PC-3 (cell line): ENCODE measurements at regions of chr1 and their contacts with region 1.

Region 1: GRCh38 chr1:207885129-207886032 is 25.5 kb downstream of the CD34 start:
- DNase-seq: peak; percentile 90
- ATAC-seq: peak; percentile 99
- H3K4me3 ChIP-seq: no peak overlapping the region
- H3K27ac ChIP-seq: no peak overlapping the region
- H3K4me1 ChIP-seq: peaks cover 10% of the 10 kb centered on the region; the same call in 1 of the 2 replicates
- H3K27me3 ChIP-seq: no peaks in the 10 kb centered on the region
- CTCF ChIP-seq: peak; percentile 98

Region 2: DNA sequence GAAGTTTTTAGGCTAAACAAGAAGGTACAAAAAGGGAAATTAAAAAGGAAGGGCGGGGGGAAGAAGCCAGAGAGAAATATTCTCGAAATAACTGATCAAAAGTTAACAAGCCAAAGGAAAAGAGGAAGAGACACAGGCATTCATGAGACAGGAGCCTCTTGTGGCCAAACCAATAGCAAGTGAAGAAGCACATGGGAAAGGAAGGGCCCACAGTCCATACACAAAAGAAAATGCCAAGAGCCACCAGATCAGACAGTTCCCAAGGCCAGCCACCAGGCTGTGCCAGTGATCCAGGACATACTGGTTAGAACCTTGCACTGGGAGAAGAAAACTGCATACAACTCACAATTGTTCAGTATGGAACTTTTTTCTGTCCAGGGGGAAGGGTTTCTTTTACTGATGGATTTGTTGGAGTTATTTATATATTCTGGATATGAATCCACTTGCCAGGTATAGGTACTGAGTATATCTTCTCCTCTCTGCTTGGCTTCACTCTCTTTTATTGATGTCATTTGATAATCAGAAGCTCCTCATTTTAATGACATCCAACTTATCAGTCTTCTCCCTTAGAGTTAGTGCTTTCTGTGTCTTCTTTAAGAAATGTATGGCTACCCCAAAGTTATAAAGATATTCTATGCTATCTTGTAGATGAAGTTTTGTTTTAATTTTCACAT is 56.8 kb before region 1 on chr1:
- CTCF ChIA-PET with region 1: interaction called, 6 read pairs
- POLR2A ChIA-PET with region 1: interaction called, 7 read pairs
- intact Hi-C with region 1: loop called (anchors 1 kb)
- DNase-seq: peak; percentile 93
- ATAC-seq: peak; percentile 72
- H3K4me3 ChIP-seq: no peak overlapping the region
- H3K27ac ChIP-seq: no peak overlapping the region
- H3K4me1 ChIP-seq: peaks cover 43% of the 10 kb centered on the region
- H3K27me3 ChIP-seq: no peaks in the 10 kb centered on the region
- CTCF ChIP-seq: peak; percentile 97

Region 3: GRCh38 chr1:207868774-207869721 is 16.3 kb before region 1 on chr1:
- CTCF ChIA-PET with region 1: interaction called, 11 read pairs
- POLR2A ChIA-PET with region 1: interaction called, 3 read pairs
- intact Hi-C with region 1: no loop called
- DNase-seq: peak; percentile 91
- ATAC-seq: peak; percentile 71
- H3K4me3 ChIP-seq: peak overlapping the region; percentile 98
- H3K27ac ChIP-seq: peak overlapping the region; percentile 76
- H3K4me1 ChIP-seq: peaks cover 47% of the 10 kb centered on the region
- H3K27me3 ChIP-seq: no peaks in the 10 kb centered on the region
- CTCF ChIP-seq: peak; percentile 66

Region 4: DNA sequence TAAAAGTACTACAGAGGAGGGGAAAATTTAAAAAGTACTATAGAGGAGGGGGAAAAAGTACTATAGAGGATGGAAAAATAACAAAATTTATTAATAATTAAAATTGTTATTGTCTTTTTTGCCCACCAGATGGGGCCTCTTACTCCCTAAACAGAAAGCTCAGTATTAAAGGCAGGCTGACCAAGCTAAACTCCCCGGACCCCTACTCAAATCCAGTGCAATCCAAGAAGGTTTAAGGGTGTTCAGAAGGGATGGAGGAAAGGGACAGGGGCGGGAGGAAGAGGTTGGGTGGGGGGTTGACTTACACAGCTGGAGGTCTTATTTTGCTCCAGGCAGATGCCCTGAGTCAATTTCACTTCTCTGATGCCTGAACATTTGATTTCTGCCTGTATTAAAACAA is 11.8 kb after region 1 on chr1:
- CTCF ChIA-PET with region 1: interaction called, 13 read pairs
- POLR2A ChIA-PET with region 1: no interaction called
- intact Hi-C with region 1: no loop called
- DNase-seq: peak; percentile 52
- ATAC-seq: peak; percentile 53
- H3K4me3 ChIP-seq: no peak overlapping the region
- H3K27ac ChIP-seq: no peak overlapping the region
- H3K4me1 ChIP-seq: no peaks in the 10 kb centered on the region
- H3K27me3 ChIP-seq: no peaks in the 10 kb centered on the region
- CTCF ChIP-seq: peak; percentile 57

Region 5: DNA sequence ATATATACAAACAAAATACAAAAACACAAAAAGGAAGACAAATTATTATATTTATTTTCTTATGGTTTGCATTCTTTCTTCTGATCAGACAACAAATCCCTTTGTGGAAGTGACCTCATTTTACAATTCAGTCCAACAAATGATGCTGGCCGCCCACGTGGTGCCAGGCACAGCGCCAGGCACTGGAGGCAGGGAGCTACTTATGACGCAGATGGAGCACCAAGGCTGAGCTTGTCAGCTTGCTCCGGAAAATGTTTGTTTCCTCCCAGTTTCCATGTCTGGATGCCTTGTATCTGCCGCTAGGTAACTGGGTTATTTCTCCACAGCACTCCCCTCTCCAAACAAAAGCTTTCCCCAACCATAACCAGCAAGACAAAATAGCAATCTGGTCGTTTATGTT is 56.3 kb after region 1 on chr1:
- CTCF ChIA-PET with region 1: interaction called, 11 read pairs
- POLR2A ChIA-PET with region 1: no interaction called
- intact Hi-C with region 1: no loop called
- DNase-seq: no peak
- ATAC-seq: no peak
- H3K4me3 ChIP-seq: no peak overlapping the region
- H3K27ac ChIP-seq: no peak overlapping the region
- H3K4me1 ChIP-seq: peaks cover 20% of the 10 kb centered on the region
- H3K27me3 ChIP-seq: no peaks in the 10 kb centered on the region
- CTCF ChIP-seq: no peak

Region 6: DNA sequence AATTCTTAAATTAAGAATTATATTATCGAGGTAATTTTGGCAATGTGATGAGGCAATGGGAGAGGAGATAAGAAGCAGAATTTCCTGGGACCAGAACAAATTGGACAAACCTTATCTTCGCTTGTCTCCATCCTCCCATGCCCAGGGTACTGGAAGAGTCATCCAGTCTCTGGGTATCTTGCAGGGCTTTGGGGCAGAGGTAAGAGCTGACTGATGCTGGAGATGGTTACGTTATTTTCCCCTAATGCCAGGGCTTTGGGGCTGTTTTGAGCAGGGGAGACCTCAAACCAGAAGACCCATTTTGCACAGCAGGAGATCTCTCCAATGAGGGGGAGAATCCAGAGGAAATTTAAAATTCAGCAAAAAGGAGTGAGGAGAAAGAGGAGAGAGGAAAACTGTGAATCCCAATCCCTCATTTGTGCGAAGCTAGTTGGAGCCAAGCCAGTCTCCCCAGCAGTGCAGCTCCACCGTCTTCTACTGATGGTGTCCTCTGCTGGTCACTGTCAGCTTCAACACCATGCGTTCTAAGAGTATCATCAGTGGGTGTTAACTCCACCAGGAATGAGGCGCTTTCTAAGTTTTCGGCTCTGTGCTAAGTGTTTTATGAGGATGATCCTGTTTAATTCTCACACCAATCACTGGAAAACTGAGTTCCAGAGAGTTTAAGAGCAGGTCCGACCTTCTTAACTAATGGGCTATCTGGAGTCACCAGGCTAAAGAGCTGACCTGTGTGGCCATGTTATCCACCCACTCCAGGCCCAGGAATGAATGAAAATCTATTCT is 112.3 kb after region 1 on chr1:
- CTCF ChIA-PET with region 1: interaction called, 5 read pairs
- POLR2A ChIA-PET with region 1: no interaction called
- intact Hi-C with region 1: loop called (anchors 1 kb)
- DNase-seq: peak; percentile 79
- ATAC-seq: peak; percentile 87
- H3K4me3 ChIP-seq: no peak overlapping the region
- H3K27ac ChIP-seq: no peak overlapping the region
- H3K4me1 ChIP-seq: no peaks in the 10 kb centered on the region
- H3K27me3 ChIP-seq: 0 out of 2 replicates have a peak, but pooled peaks cover 3% of the 10 kb centered on the region
- CTCF ChIP-seq: peak; percentile 93

Region 7: GRCh38 chr1:208251015-208251414 is 365.6 kb after region 1 on chr1:
- CTCF ChIA-PET with region 1: no interaction called
- POLR2A ChIA-PET with region 1: no interaction called
- intact Hi-C with region 1: no loop called
- DNase-seq: no peak
- ATAC-seq: no peak
- H3K4me3 ChIP-seq: no peak overlapping the region
- H3K27ac ChIP-seq: no peak overlapping the region
- H3K4me1 ChIP-seq: no peaks in the 10 kb centered on the region
- H3K27me3 ChIP-seq: no peaks in the 10 kb centered on the region
- CTCF ChIP-seq: no peak

Region 8: GRCh38 chr1:208393826-208394225 is 508.4 kb after region 1 on chr1:
- CTCF ChIA-PET with region 1: no interaction called
- POLR2A ChIA-PET with region 1: no interaction called
- intact Hi-C with region 1: no loop called
- DNase-seq: no peak
- ATAC-seq: no peak
- H3K4me3 ChIP-seq: no peak overlapping the region
- H3K27ac ChIP-seq: no peak overlapping the region
- H3K4me1 ChIP-seq: no peaks in the 10 kb centered on the region
- H3K27me3 ChIP-seq: no peaks in the 10 kb centered on the region
- CTCF ChIP-seq: no peak